ENCODE measurements at regions of chr16 and their contacts with region 1.

Region 1: GRCh38 chr16:27367461-27368357 is 34.3 kb upstream of the IL21R start:
- DNase-seq: peak; percentile 76
- H3K4me3 Mint-ChIP-seq: peak overlapping the region; percentile 56
- H3K27ac Mint-ChIP-seq: peak overlapping the region; percentile 96
- H3K4me1 Mint-ChIP-seq: peaks cover 67% of the 10 kb centered on the region
- H3K27me3 Mint-ChIP-seq: no peaks in the 10 kb centered on the region

Region 2: GRCh38 chr16:27154705-27155521 is 212.8 kb before region 1 on chr16:
- intact Hi-C with region 1: loop called (anchors 1 kb)
- DNase-seq: peak; percentile 39
- H3K4me3 Mint-ChIP-seq: no peak overlapping the region
- H3K27ac Mint-ChIP-seq: no peak overlapping the region
- H3K4me1 Mint-ChIP-seq: peaks cover 12% of the 10 kb centered on the region
- H3K27me3 Mint-ChIP-seq: peaks cover 2% of the 10 kb centered on the region

Region 3: GRCh38 chr16:27253526-27253930 is 114.2 kb before region 1 on chr16:
- intact Hi-C with region 1: loop called (anchors 1 kb)
- DNase-seq: no peak
- H3K4me3 Mint-ChIP-seq: peak overlapping the region; percentile 59
- H3K27ac Mint-ChIP-seq: peak overlapping the region; percentile 88
- H3K4me1 Mint-ChIP-seq: peaks cover 82% of the 10 kb centered on the region
- H3K27me3 Mint-ChIP-seq: no peaks in the 10 kb centered on the region

Region 4: GRCh38 chr16:27313422-27314160 is 54.1 kb before region 1 on chr16 and contains the start of gene IL4R:
- intact Hi-C with region 1: loop called (anchors 1 kb)
- DNase-seq: peak; percentile 72
- H3K4me3 Mint-ChIP-seq: peak within 1 kb of the TSS; percentile 94
- H3K27ac Mint-ChIP-seq: peak within 1 kb of the TSS; percentile 99
- H3K4me1 Mint-ChIP-seq: peaks cover 47% of the 10 kb centered on the region
- H3K27me3 Mint-ChIP-seq: peaks cover 2% of the 10 kb centered on the region
- total RNA-seq, gene IL4R: 288 and 320 TPM in 2 replicates

Region 5: GRCh38 chr16:27377666-27378485 is 10.2 kb after region 1 on chr16:
- intact Hi-C with region 1: no loop called
- DNase-seq: peak; percentile 39
- H3K4me3 Mint-ChIP-seq: peak overlapping the region; percentile 81
- H3K27ac Mint-ChIP-seq: peak overlapping the region; percentile 99
- H3K4me1 Mint-ChIP-seq: peaks cover 49% of the 10 kb centered on the region
- H3K27me3 Mint-ChIP-seq: no peaks in the 10 kb centered on the region

Region 6: DNA sequence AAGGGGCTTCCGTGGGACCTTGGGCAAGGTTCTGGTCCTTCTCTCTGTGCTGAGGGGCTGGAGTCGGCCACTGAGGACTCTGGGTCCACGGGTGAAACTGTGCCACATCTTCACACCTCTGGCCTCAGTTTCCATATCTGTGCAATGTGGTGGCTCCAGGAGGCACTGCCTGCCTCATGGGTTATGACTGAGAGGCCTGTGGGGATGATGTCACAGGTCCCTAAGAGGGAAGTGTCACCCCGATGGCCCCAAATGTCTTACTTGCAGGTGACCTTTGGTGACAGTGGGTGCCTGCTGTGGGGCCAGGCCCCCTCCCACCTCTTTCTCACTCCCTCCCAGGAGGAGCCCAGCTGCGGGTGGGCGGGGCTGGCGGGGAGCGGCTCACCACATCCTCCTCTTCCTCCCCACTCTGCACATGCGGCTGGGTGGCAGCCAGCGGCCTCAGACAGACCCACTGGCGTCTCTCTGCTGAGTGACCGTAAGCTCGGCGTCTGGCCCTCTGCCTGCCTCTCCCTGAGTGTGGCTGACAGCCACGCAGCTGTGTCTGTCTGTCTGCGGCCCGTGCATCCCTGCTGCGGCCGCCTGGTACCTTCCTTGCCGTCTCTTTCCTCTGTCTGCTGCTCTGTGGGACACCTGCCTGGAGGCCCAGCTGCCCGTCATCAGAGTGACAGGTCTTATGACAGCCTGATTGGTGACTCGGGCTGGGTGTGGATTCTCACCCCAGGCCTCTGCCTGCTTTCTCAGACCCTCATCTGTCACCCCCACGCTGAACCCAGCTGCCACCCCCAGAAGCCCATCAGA is 34.3 kb after region 1 on chr16 and contains the start of gene IL21R:
- intact Hi-C with region 1: loop called (anchors 1 kb)
- DNase-seq: peak; percentile 78
- H3K4me3 Mint-ChIP-seq: peak within 1 kb of the TSS; percentile 100
- H3K27ac Mint-ChIP-seq: peak within 1 kb of the TSS; percentile 100
- H3K4me1 Mint-ChIP-seq: peaks cover 68% of the 10 kb centered on the region
- H3K27me3 Mint-ChIP-seq: no peaks in the 10 kb centered on the region
- total RNA-seq, gene IL21R: 101 and 104 TPM in 2 replicates

Region 7: DNA sequence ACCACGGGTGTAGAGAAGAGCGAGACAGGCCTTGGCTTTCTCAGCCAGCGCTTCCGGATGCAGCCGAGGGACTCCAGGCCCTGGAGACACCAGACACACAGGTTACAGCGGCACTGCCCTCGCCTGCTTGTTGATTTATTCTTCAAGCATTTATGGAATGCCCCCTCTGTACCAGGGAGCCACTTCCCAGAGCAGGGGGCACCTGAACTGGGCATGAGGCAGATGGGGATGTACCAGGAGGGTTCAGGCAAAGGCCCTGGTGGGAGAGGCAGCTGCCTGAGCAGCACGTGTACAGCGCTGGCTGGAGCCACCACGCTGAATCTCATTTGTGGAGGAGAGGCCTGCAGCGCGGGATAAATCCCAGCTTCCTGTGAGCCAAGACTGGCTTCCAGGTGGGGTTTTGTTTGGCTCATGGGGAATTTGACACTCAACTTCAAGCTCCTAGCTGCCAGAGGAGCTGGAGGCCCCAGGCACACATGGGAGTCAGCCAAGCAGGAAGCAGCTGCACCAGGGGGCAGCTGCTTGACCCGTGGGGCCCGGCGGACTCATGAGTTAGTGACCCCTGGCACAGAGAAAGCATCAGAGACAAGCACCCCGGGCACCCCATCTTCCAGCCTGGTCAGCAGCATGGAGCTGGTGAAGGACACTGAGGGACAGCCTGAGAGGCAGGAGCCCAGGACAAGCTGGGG is 93.9 kb after region 1 on chr16:
- intact Hi-C with region 1: loop called (anchors 1 kb)
- DNase-seq: no peak
- H3K4me3 Mint-ChIP-seq: no peak overlapping the region
- H3K27ac Mint-ChIP-seq: no peak overlapping the region
- H3K4me1 Mint-ChIP-seq: peaks cover 22% of the 10 kb centered on the region
- H3K27me3 Mint-ChIP-seq: no peaks in the 10 kb centered on the region

Region 8: DNA sequence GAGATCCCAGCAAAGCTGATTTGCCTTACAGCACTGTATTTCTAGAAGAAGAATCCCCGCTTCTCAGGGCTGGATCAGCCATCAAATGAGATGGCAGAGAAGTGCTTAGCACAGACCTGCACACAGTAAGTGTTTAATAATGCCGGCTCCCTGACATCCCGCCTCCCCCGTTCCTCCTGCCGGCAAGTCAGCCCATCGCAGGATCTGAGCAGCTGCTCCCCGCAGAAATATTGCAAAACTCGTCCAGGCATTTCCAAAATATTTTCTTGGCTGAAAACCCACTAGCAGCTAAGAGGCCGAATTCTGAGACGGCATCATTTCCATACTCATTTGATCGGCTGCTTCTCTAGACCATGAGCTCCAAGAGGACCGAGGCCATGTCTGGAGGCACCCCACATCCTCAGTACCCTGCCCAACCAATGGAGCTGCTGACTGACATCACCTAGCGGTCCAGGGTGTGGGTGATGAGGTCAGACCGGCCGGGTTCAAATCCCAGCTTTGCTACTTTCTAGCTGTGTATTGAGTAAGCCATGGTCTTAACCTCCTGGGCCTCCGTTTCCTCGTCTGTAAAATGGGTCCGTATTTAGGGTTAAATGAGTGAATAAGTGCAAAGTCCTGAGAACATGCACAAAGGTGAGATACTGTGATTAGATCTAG is 433.7 kb after region 1 on chr16:
- intact Hi-C with region 1: no loop called
- DNase-seq: no peak
- H3K4me3 Mint-ChIP-seq: no peak overlapping the region
- H3K27ac Mint-ChIP-seq: no peak overlapping the region
- H3K4me1 Mint-ChIP-seq: no peaks in the 10 kb centered on the region
- H3K27me3 Mint-ChIP-seq: peaks cover 2% of the 10 kb centered on the region